ENCODE measurements at regions of chr3 and their contacts with region 1.

Region 1: DNA sequence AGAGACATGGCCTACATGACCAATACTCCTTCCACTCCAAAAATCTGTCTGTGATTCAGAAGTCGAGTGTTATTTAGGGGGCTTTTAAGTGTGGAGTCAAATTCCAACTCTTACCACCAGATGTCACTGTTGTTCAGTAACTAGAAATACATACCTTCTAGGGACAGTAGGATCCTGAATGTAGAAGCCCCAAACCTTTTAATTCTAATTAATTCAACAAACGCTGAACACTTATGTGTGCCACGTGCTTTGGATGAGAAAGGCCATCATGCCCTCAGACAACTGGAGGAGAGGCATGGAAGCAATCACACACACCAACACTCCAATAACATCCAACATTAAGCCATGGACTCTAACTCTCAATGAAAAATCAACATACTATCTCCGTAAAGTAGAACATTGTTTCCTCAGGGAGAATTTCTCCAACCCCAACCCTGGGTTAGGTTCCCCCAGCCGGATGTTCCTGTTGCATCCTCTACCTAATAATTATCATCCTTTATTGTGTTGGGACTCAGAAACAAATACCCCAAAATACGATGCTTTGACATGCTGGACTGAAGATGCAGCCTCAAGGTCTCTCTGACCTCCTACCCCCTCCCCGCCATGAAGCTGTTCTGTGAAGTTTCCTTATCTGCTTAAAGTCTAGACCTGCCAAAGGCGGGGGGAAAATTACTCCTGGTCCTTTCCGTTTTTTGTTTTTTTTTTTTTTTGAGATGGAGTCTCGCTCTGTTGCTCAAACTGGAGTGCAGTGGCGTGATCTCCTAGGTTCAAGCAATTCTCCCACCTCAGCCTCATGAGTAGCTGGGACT is 8.0 kb upstream of the CCDC13 start:
- DNase-seq: no peak
- H3K4me3 ChIP-seq: no peak overlapping the region
- H3K27ac ChIP-seq: peak overlapping the region; percentile 66 to 88 (median 66)
- H3K4me1 ChIP-seq: peaks cover 20 to 34% of the 10 kb centered on the region in 2 donors
- H3K27me3 ChIP-seq: no peaks in the 10 kb centered on the region
- CTCF ChIP-seq: peak; percentile 64 to 92 (median 80)
- POLR2A ChIP-seq: no peak

Region 2: GRCh38 chr3:42839616-42840015 is 58.5 kb after region 1 on chr3:
- intact Hi-C with region 1: loop called (anchors 5 kb)
- DNase-seq: peak; percentile 32 to 46
- H3K4me3 ChIP-seq: no peak overlapping the region
- H3K27ac ChIP-seq: no peak overlapping the region
- H3K4me1 ChIP-seq: peaks cover 4 to 5% of the 10 kb centered on the region in 2 donors
- H3K27me3 ChIP-seq: no peaks in the 10 kb centered on the region
- CTCF ChIP-seq: peak; percentile 50 to 96 (median 83)
- POLR2A ChIP-seq: no peak

Region 3: GRCh38 chr3:42880601-42881451 is 99.7 kb after region 1 on chr3:
- intact Hi-C with region 1: loop called (anchors 5 kb)
- DNase-seq: peak; percentile 83 to 88
- H3K4me3 ChIP-seq: peak overlapping the region; percentile 61 to 81 (median 76)
- H3K27ac ChIP-seq: peak overlapping the region; percentile 47 to 81 (median 65)
- H3K4me1 ChIP-seq: peaks cover 5 to 7% of the 10 kb centered on the region in 2 donors
- H3K27me3 ChIP-seq: no peaks in the 10 kb centered on the region
- CTCF ChIP-seq: peak; percentile 79 to 95 (median 86)
- POLR2A ChIP-seq: peak in 1 of 2 donors; percentile 31

Region 4: DNA sequence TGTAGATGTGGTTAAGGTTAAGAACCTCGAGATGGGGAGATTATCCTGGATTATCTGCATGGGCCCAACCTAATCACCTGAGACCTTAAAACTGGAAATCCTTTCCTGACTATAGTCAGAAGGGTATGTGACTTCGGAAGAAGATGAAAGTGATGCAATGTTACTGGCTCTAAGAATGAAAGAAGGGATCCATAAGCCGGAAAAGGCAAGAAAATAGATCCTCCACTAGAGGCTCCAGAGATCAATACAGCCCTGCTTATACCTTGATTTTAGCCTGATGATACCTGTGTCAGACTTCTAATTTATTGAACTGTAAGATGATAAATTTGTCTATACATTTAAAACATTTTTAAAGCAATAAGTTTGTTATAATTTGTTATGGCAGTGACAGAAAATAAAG is 176.5 kb after region 1 on chr3:
- intact Hi-C with region 1: no loop called
- DNase-seq: no peak
- H3K4me3 ChIP-seq: no peak overlapping the region
- H3K27ac ChIP-seq: no peak overlapping the region
- H3K4me1 ChIP-seq: peaks cover 10% of the 10 kb centered on the region in 2 donors
- H3K27me3 ChIP-seq: no peaks in the 10 kb centered on the region
- CTCF ChIP-seq: no peak
- POLR2A ChIP-seq: no peak